Activated CD8-positive, alpha-beta memory T cell treated with anti-CD3 and anti-CD28 coated beads, Interleukin-2, amount 10 ng/mL, durations not matched to agents 7 days and 5 days (primary cell): ENCODE measurements at regions of chr19 and their contacts with region 1.

Region 1: GRCh38 chr19:13784731-13785452 is 10.4 kb upstream of the ZSWIM4 start:
- DNase-seq: peak; percentile 85
- ATAC-seq: peak; percentile 77
- H3K4me3 Mint-ChIP-seq: peak overlapping the region; percentile 33
- H3K27ac Mint-ChIP-seq: peak overlapping the region; percentile 68
- H3K4me1 Mint-ChIP-seq: peaks cover 36% of the 10 kb centered on the region
- H3K27me3 Mint-ChIP-seq: no peaks in the 10 kb centered on the region

Region 2: GRCh38 chr19:13774217-13775191 is 10.4 kb before region 1 on chr19 and contains the start of gene C19orf53:
- CTCF ChIA-PET with region 1: interaction called, 17 read pairs
- DNase-seq: peak; percentile 93
- ATAC-seq: peak; percentile 99
- H3K4me3 Mint-ChIP-seq: peak within 1 kb of the TSS; percentile 95
- H3K27ac Mint-ChIP-seq: peak within 1 kb of the TSS; percentile 84
- H3K4me1 Mint-ChIP-seq: peaks cover 20% of the 10 kb centered on the region
- H3K27me3 Mint-ChIP-seq: no peaks in the 10 kb centered on the region
- total RNA-seq, gene C19orf53: 77.7 to 94.0 TPM

Region 3: DNA sequence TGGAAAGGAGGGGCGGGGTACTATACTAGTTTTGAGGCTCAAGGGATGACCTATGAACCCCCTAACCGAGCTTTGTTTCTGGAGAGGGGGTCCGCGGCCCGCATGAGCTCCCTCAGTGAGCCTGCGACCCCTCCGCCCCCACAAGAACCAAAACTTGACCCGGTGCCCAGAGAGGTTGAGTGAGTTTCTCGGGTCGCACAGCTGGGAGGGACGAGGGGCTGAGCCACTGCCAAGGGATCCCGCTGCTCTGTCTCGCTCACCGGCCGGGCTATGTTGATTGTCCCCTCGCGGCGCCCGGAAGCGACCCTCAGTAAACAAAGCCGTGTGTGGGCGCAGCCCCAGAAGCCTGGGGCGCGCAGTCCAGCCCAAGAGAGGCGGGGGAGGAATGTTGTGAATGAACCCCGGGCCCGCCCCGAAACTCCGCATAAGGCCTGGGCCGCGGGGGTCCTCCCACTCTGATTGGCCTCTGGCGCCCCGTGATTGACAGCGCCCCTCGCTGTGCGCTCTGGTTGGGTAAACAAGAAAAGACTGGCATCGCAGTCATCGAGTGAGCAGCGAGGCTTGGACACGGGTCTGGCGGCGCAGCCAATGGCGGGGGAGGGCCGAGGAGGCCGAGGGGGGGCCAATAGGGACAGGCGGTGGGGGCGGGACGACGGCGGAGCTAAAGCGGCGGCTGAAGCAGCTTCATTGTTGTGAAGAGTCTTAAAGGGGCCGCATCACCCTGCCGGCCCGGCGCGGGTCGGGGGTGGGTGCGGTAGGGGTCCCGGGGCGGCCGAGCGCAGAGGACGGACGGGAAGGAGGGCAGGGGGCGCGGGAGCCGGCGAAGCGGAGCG is 10.1 kb after region 1 on chr19 and contains the start of gene ZSWIM4:
- CTCF ChIA-PET with region 1: interaction called, 11 read pairs
- DNase-seq: peak; percentile 99
- ATAC-seq: peak; percentile 98
- H3K4me3 Mint-ChIP-seq: peak within 1 kb of the TSS; percentile 89
- H3K27ac Mint-ChIP-seq: peak within 1 kb of the TSS; percentile 95
- H3K4me1 Mint-ChIP-seq: peaks cover 25% of the 10 kb centered on the region
- H3K27me3 Mint-ChIP-seq: no peaks in the 10 kb centered on the region
- total RNA-seq, gene ZSWIM4: 8.1 to 8.4 TPM

Region 4: GRCh38 chr19:13839130-13839937 is 54.4 kb after region 1 on chr19:
- CTCF ChIA-PET with region 1: interaction called, 39 read pairs
- DNase-seq: peak; percentile 94
- ATAC-seq: peak; percentile 37
- H3K4me3 Mint-ChIP-seq: peak overlapping the region; percentile 90
- H3K27ac Mint-ChIP-seq: peak overlapping the region; percentile 95
- H3K4me1 Mint-ChIP-seq: peaks cover 45% of the 10 kb centered on the region
- H3K27me3 Mint-ChIP-seq: no peaks in the 10 kb centered on the region

Region 5: GRCh38 chr19:13846557-13847406 is 61.9 kb after region 1 on chr19:
- CTCF ChIA-PET with region 1: interaction called, 24 read pairs
- DNase-seq: peak; percentile 98
- ATAC-seq: peak; percentile 61
- H3K4me3 Mint-ChIP-seq: peak overlapping the region; percentile 73
- H3K27ac Mint-ChIP-seq: peak overlapping the region; percentile 95
- H3K4me1 Mint-ChIP-seq: peaks cover 49% of the 10 kb centered on the region
- H3K27me3 Mint-ChIP-seq: no peaks in the 10 kb centered on the region

Region 6: DNA sequence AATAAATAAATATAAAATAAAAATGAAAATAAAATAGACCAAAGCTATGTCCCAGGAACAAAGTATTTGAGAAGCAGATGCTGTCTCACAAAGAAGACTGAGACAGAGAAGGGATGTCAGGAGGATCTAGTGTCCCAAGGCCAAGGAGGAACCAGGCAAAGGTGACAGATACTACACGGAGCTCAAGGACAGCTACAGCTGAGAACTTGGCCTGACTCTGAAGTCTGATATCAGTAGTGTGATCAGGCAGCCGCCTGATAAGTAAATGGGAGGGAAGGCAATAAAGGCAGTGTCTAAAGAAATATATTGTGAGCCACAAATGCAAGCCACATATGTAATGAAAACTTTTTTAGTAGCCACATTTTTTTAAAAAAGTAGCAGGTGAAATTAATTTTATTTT is 71.6 kb after region 1 on chr19:
- CTCF ChIA-PET with region 1: interaction called, 244 read pairs
- DNase-seq: no peak
- ATAC-seq: no peak
- H3K4me3 Mint-ChIP-seq: no peak overlapping the region
- H3K27ac Mint-ChIP-seq: no peak overlapping the region
- H3K4me1 Mint-ChIP-seq: peaks cover 16% of the 10 kb centered on the region
- H3K27me3 Mint-ChIP-seq: no peaks in the 10 kb centered on the region